ENCODE measurements at regions of chr5 and their contacts with region 1.

Region 1: GRCh38 chr5:53095931-53096525 is 13.5 kb downstream of the MOCS2 start:
- DNase-seq: peak; percentile 49 to 50
- H3K4me3 ChIP-seq: no peak overlapping the region
- H3K27ac ChIP-seq: no peak overlapping the region
- H3K4me1 ChIP-seq: peaks cover 4% of the 10 kb centered on the region; the same call in 1 of the 2 replicates
- H3K27me3 ChIP-seq: no peaks in the 10 kb centered on the region
- CTCF ChIP-seq: peak; percentile 90

Region 2: GRCh38 chr5:52922386-52922785 is 173.6 kb before region 1 on chr5:
- CTCF ChIA-PET with region 1: no interaction called
- POLR2A ChIA-PET with region 1: interaction called, 4 read pairs
- intact Hi-C with region 1: loop called (anchors 5 kb)
- DNase-seq: peak; percentile 83 to 98
- H3K4me3 ChIP-seq: no peak overlapping the region
- H3K27ac ChIP-seq: peak overlapping the region; percentile 78
- H3K4me1 ChIP-seq: peaks cover 20% of the 10 kb centered on the region
- H3K27me3 ChIP-seq: no peaks in the 10 kb centered on the region
- CTCF ChIP-seq: no peak

Region 3: GRCh38 chr5:52948418-52949076 is 147.5 kb before region 1 on chr5:
- CTCF ChIA-PET with region 1: interaction called, 4 read pairs
- POLR2A ChIA-PET with region 1: no interaction called
- intact Hi-C with region 1: loop called (anchors 1 kb)
- DNase-seq: peak; percentile 65 to 69
- H3K4me3 ChIP-seq: no peak overlapping the region
- H3K27ac ChIP-seq: no peak overlapping the region
- H3K4me1 ChIP-seq: peaks cover 13% of the 10 kb centered on the region
- H3K27me3 ChIP-seq: no peaks in the 10 kb centered on the region
- CTCF ChIP-seq: peak; percentile 92

Measured in PC-9 (cell line).